H1 (cell line): ENCODE measurements at regions of chr7 and their contacts with region 1.

Region 1: GRCh38 chr7:30938435-30939316 is 25.1 kb upstream of the GHRHR start:
- DNase-seq: peak; percentile 91 to 98
- H3K4me3 ChIP-seq: peak overlapping the region in 3 of 4 experiments; percentile 31 to 52 (median 34); a peak in 6 of 8 replicates
- H3K27ac ChIP-seq: peak overlapping the region; percentile 23; the same call in 1 of the 2 replicates
- H3K4me1 ChIP-seq: peaks cover 0 to 5% (median 4%) of the 10 kb centered on the region in 4 experiments; a peak in 6 of 7 replicates
- H3K27me3 ChIP-seq: 0 out of 7 replicates have a peak, but pooled peaks cover 0 to 2% (median 0%) of the 10 kb centered on the region in 4 experiments
- CTCF ChIP-seq: peak; percentile 96 to 100 (median 99)
- EP300 ChIP-seq: no peak
- POLR2A ChIP-seq: peak in 1 of 2 experiments; percentile 62; a peak in 2 of 3 replicates
- RAD21 ChIP-seq: peak; percentile 72 to 76

Region 2: GRCh38 chr7:30717181-30717580 is 221.5 kb before region 1 on chr7:
- CTCF ChIA-PET with region 1: no interaction called
- POLR2A ChIA-PET with region 1: no interaction called
- DNase-seq: no peak
- H3K4me3 ChIP-seq: no peak overlapping the region
- H3K27ac ChIP-seq: no peak overlapping the region
- H3K4me1 ChIP-seq: no peaks in the 10 kb centered on the region; a peak in 1 of 7 replicates
- H3K27me3 ChIP-seq: no peaks in the 10 kb centered on the region
- CTCF ChIP-seq: peak; percentile 31 to 57 (median 55); a peak in 3 of 4 replicates
- EP300 ChIP-seq: no peak
- POLR2A ChIP-seq: no peak
- RAD21 ChIP-seq: peak; percentile 51 to 66

Region 3: DNA sequence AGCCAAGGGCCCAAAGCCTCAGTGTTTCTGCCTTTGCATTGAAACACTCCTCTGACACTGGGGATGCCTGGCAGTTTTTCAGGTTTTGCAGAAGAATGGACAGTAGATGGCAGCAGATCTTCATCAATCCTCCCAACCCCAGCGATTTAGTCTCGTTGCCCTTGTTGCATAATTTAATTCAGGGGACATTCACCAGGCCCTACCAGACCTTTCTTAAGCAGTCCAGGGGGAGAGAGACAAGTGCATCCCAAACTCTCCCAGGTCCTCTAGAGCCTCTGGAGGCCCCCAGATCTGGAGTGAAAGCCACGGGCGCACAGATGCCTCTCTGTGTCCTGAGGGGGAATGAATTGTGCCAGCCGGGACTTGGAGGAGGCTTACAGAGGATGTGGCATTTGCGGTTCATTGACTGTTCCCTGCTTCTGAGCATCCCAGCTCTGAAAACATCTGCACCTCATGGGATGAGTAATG is 137.9 kb before region 1 on chr7:
- CTCF ChIA-PET with region 1: interaction called, 11 read pairs
- POLR2A ChIA-PET with region 1: interaction called, 3 read pairs
- DNase-seq: peak; percentile 21 to 66
- H3K4me3 ChIP-seq: no peak overlapping the region
- H3K27ac ChIP-seq: no peak overlapping the region
- H3K4me1 ChIP-seq: no peaks in the 10 kb centered on the region
- H3K27me3 ChIP-seq: no peaks in the 10 kb centered on the region
- CTCF ChIP-seq: peak; percentile 31 to 88 (median 77)
- EP300 ChIP-seq: no peak
- POLR2A ChIP-seq: no peak
- RAD21 ChIP-seq: peak; percentile 98 to 99

Region 4: DNA sequence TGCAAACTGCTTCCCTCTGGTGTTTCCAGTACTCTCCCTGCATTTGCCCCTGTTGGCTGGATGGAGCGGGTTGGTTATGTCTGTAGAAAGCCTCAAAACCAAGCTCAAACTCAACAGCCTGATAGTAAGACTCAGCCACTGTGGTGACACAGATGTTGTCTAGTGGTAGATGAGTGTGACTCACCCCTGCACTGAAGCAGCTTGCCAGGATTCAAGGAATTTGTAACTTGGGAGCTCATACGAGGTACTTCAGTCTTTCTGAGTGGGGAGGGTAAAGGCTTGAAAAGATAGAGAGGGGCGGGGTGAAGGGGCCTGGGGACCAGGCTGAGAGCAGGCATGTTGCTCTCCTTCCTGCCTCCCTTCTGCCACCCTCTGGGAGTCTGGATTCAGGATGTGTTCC is 49.9 kb before region 1 on chr7:
- CTCF ChIA-PET with region 1: interaction called, 15 read pairs
- POLR2A ChIA-PET with region 1: no interaction called
- DNase-seq: no peak
- H3K4me3 ChIP-seq: no peak overlapping the region
- H3K27ac ChIP-seq: no peak overlapping the region
- H3K4me1 ChIP-seq: peaks cover 2 to 11% (median 8%) of the 10 kb centered on the region in 4 experiments
- H3K27me3 ChIP-seq: no peaks in the 10 kb centered on the region
- CTCF ChIP-seq: no peak
- EP300 ChIP-seq: no peak
- POLR2A ChIP-seq: no peak
- RAD21 ChIP-seq: no peak; a peak in 1 of 4 replicates

Region 5: DNA sequence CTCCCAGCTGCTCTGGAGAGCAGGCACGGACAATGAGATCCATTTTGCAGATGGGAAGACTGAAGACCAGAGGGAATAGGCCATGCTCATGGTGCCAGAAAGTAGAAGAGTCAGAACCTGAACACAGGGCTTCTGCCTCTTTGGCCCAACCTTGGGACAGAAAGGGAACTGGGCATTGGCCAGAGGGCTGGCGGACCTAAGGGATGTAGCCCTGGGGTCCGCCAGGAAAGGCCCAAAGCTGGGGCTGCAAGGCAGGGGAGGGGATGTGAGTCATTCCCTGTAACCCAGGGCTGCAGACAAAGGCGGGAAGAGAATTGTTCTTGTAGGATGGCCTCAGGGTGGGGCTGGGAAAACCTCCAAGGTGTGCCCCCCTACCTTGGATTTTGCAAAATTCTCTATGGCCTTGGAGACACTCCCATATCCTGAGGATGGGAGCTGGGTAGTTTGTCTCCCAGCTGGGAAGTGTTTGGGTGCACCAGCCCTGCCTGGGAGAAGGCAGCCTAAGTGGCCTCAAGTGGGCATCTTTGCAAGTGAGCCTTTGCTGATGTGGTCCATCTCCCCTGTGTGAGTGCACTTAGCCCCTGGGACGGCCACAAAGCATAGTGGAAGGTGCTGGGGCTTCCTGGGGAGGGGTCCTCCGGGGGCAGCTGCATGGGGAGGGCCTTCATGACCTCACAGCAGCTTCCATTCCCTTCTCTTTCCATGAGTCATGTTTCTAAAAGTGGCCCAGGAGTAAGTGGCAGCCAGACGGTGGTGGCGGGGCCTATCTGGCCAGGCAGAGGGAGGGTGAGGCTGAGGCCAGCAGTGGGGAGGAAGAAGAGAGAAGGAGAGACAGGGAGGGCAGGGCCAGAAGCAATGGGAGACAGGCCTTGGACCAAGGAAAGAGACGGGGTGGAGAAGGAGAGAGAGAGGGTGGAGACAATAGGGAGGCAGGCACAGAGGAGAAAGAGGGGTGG is 17.8 kb before region 1 on chr7:
- CTCF ChIA-PET with region 1: interaction called, 55 read pairs
- POLR2A ChIA-PET with region 1: interaction called, 3 read pairs
- DNase-seq: peak in 1 of 2 experiments; percentile 37
- H3K4me3 ChIP-seq: no peak overlapping the region
- H3K27ac ChIP-seq: no peak overlapping the region
- H3K4me1 ChIP-seq: peaks cover 0 to 3% (median 0%) of the 10 kb centered on the region in 4 experiments; a peak in 1 of 7 replicates
- H3K27me3 ChIP-seq: no peaks in the 10 kb centered on the region; a peak in 1 of 7 replicates
- CTCF ChIP-seq: no peak
- EP300 ChIP-seq: no peak
- POLR2A ChIP-seq: no peak
- RAD21 ChIP-seq: no peak

Region 6: GRCh38 chr7:30950197-30950596 is 11.5 kb after region 1 on chr7:
- CTCF ChIA-PET with region 1: interaction called, 13 read pairs
- POLR2A ChIA-PET with region 1: no interaction called
- DNase-seq: no peak
- H3K4me3 ChIP-seq: no peak overlapping the region
- H3K27ac ChIP-seq: no peak overlapping the region
- H3K4me1 ChIP-seq: no peaks in the 10 kb centered on the region
- H3K27me3 ChIP-seq: no peaks in the 10 kb centered on the region
- CTCF ChIP-seq: no peak
- EP300 ChIP-seq: no peak
- POLR2A ChIP-seq: no peak
- RAD21 ChIP-seq: no peak

Region 7: GRCh38 chr7:31134246-31135188 is 195.8 kb after region 1 on chr7:
- CTCF ChIA-PET with region 1: interaction called, 17 read pairs
- POLR2A ChIA-PET with region 1: no interaction called
- DNase-seq: peak; percentile 56 to 84
- H3K4me3 ChIP-seq: peak overlapping the region in 1 of 4 experiments; percentile 26; a peak in 1 of 8 replicates
- H3K27ac ChIP-seq: no peak overlapping the region
- H3K4me1 ChIP-seq: no peaks in the 10 kb centered on the region; a peak in 1 of 7 replicates
- H3K27me3 ChIP-seq: no peaks in the 10 kb centered on the region
- CTCF ChIP-seq: peak; percentile 50 to 83 (median 82)
- EP300 ChIP-seq: no peak
- POLR2A ChIP-seq: no peak
- RAD21 ChIP-seq: peak; percentile 87 to 93

Region 8: GRCh38 chr7:31160941-31161340 is 222.3 kb after region 1 on chr7:
- CTCF ChIA-PET with region 1: no interaction called
- POLR2A ChIA-PET with region 1: no interaction called
- DNase-seq: no peak
- H3K4me3 ChIP-seq: no peak overlapping the region
- H3K27ac ChIP-seq: no peak overlapping the region
- H3K4me1 ChIP-seq: peaks cover 0 to 3% (median 0%) of the 10 kb centered on the region in 4 experiments; a peak in 1 of 7 replicates
- H3K27me3 ChIP-seq: no peaks in the 10 kb centered on the region
- CTCF ChIP-seq: no peak
- EP300 ChIP-seq: no peak
- POLR2A ChIP-seq: no peak
- RAD21 ChIP-seq: no peak